A549 (cell line): ENCODE measurements at regions of chr2 and their contacts with region 1.

Region 1: DNA sequence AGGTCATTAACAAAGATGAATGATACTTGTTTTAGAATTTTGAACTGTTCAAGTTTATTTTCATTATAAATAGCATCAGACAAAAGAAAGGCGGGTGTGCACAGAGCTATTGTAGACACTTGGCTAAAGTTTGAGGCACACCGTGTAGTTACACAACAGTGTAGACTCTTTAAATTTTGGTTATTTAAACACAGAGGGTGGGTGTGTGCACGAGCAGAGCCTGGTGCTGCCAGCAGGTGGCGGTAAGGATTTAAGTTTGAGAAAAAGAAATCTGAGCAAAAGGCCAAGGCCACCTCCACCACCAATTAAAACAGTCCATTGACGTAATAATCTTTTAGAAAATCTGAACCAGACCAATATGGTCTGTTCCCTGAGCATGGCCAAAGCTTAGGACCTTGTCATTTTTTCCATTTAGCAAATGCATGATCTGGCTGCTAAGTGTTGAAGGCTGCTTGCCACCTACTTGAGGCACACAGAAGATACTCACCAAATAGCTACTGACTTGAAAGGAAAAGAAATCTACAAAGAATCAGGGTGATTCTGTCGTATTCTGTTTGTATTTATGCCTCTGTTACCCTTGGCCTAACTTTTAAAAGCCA is 14.3 kb downstream of the COPS7B start:
- DNase-seq: peak; percentile 15 to 49
- ATAC-seq: peak; percentile 74 to 85; a peak in 5 of 6 replicates
- H3K4me3 ChIP-seq: no peak overlapping the region
- H3K27ac ChIP-seq: no peak overlapping the region
- H3K4me1 ChIP-seq: peaks cover 5% of the 10 kb centered on the region; the same call in 1 of the 3 replicates
- CTCF ChIP-seq: peak; percentile 68
- EP300 ChIP-seq: no peak
- POLR2A ChIP-seq: no peak
- RAD21 ChIP-seq: peak; percentile 28 to 52; a peak in 2 of 5 replicates

Region 2: DNA sequence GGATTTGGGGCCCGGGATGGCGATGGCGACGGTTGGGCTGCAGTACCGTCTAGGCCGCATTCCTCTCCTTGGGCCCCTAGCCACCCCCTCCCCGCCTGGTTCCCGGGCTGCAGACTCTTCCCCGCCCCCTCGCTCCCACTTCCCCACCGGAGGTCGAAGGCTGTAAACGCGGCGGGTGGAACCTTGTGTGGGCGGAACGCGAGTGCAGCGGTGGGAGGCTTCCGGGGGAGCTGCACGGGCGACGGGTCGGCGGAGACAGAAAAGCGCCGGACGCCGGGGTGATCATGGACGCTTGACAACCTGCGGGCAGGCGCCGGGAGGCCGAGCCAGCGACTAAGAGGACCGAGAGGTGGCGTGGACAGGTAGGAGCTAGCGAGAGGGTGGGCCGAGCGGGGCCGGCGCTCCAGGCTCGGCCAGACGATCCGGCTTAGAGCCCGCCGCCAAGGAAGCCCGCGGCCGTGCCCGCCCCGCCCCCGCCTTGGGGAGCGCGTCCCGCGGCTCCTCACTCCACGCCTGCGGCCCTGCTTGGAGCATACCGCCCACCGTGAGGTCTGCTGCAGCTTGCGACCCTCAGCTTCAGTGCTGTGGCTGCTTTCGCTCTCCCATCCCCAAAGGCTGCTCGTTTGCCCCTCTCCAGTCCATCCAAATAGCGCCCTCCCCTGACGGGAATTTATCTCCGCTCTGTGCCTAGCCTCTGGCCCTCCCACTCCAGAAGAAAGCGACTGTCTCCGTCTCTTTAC is 14.2 kb before region 1 on chr2 and contains the start of gene COPS7B:
- CTCF ChIA-PET with region 1: interaction called, 20 read pairs
- POLR2A ChIA-PET with region 1: interaction called, 3 read pairs
- DNase-seq: peak; percentile 66 to 88
- ATAC-seq: peak; percentile 78 to 84
- H3K4me3 ChIP-seq: peak within 1 kb of the TSS; percentile 96
- H3K27ac ChIP-seq: peak within 1 kb of the TSS; percentile 86 to 87
- H3K4me1 ChIP-seq: peaks cover 21% of the 10 kb centered on the region
- CTCF ChIP-seq: peak; percentile 60
- EP300 ChIP-seq: no peak
- POLR2A ChIP-seq: peak; percentile 37
- RAD21 ChIP-seq: no peak
- polyA plus RNA-seq, gene COPS7B: 54.9 and 63.4 TPM in 2 replicates

Region 3: GRCh38 chr2:231810905-231811304 is 10.3 kb after region 1 on chr2:
- CTCF ChIA-PET with region 1: interaction called, 27 read pairs
- POLR2A ChIA-PET with region 1: no interaction called
- DNase-seq: no peak
- ATAC-seq: peak; percentile 31 to 47; a peak in 3 of 6 replicates
- H3K4me3 ChIP-seq: no peak overlapping the region
- H3K27ac ChIP-seq: no peak overlapping the region
- H3K4me1 ChIP-seq: peaks cover 9% of the 10 kb centered on the region; the same call in 2 of the 3 replicates
- CTCF ChIP-seq: no peak
- EP300 ChIP-seq: no peak
- POLR2A ChIP-seq: no peak
- RAD21 ChIP-seq: no peak

Region 4: GRCh38 chr2:231819447-231820042 is 19.0 kb after region 1 on chr2:
- CTCF ChIA-PET with region 1: interaction called, 27 read pairs
- POLR2A ChIA-PET with region 1: no interaction called
- DNase-seq: no peak
- ATAC-seq: peak; percentile 50 to 59; a peak in 5 of 6 replicates
- H3K4me3 ChIP-seq: no peak overlapping the region
- H3K27ac ChIP-seq: no peak overlapping the region
- H3K4me1 ChIP-seq: no peaks in the 10 kb centered on the region
- CTCF ChIP-seq: no peak
- EP300 ChIP-seq: no peak
- POLR2A ChIP-seq: no peak
- RAD21 ChIP-seq: no peak

Region 5: DNA sequence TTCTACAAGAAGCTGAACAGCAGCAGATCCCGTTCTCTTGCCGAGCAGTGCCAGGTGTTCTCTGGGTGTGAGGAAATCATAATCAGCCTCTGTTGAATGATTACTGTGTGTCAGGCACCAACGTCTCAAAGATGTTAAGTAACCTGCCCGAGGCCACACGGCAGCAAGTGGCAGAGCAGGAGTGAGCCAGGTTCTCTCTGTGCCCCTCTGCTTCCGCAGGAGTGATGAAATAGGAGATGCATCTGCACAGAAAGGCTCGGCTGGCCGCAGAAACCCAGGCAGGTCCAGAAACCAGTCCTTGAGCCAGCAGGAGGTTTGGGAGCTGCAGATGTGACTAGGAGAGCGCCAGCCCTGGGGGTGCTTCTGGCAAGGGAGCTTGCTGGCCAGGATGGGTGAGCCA is 54.1 kb after region 1 on chr2:
- CTCF ChIA-PET with region 1: interaction called, 30 read pairs
- POLR2A ChIA-PET with region 1: no interaction called
- DNase-seq: no peak
- ATAC-seq: no peak
- H3K4me3 ChIP-seq: no peak overlapping the region
- H3K27ac ChIP-seq: no peak overlapping the region
- H3K4me1 ChIP-seq: no peaks in the 10 kb centered on the region
- CTCF ChIP-seq: no peak
- EP300 ChIP-seq: no peak
- POLR2A ChIP-seq: no peak
- RAD21 ChIP-seq: no peak

Region 6: GRCh38 chr2:232058063-232058877 is 257.7 kb after region 1 on chr2:
- CTCF ChIA-PET with region 1: no interaction called
- POLR2A ChIA-PET with region 1: no interaction called
- DNase-seq: no peak
- ATAC-seq: no peak
- H3K4me3 ChIP-seq: no peak overlapping the region
- H3K27ac ChIP-seq: no peak overlapping the region
- H3K4me1 ChIP-seq: no peaks in the 10 kb centered on the region
- CTCF ChIP-seq: no peak
- EP300 ChIP-seq: no peak
- POLR2A ChIP-seq: no peak
- RAD21 ChIP-seq: no peak